AG04450 (cell line): ENCODE measurements at regions of chr2 and their contacts with region 1.

Region 1: DNA sequence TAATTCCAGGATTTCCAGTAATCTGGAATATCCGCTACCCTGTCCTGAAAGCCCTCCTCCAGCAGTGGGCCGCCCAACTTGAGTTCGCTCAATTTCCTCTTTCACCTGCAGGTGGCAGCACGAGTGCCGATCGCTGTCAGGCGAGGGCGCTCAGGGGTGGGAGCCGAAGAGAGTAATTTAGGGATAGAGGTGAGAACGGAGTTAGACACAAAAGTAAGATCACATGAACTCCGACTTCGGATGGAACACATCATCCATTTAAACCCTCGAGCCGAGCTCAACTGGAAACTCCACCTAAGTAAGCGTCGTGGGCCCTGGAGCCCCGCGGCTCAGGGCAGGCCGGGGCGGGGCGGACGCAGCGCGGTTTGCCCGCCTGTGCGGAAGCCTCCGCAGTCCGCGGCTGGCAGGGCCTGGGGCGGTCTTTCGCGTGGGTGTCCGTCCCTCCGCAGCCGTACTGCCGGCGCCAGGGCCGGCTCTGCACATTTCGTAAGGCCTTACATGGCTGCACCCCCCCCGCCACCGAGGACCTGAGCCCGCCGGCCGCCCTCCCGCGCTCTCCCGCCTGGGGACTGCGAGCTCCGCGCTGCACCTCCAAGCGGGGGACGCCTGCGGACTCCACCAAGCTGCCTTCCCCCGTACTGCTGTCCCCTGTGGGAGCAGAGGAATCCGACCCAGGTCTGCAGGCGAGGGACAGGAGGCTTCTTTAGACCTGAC is 61.2 kb downstream of the SEMA4F start:
- DNase-seq: peak; percentile 24
- H3K4me3 ChIP-seq: peak overlapping the region; percentile 60
- H3K27ac ChIP-seq: no peak overlapping the region
- H3K27me3 ChIP-seq: peaks cover 14% of the 10 kb centered on the region
- CTCF ChIP-seq: peak; percentile 90

Region 2: DNA sequence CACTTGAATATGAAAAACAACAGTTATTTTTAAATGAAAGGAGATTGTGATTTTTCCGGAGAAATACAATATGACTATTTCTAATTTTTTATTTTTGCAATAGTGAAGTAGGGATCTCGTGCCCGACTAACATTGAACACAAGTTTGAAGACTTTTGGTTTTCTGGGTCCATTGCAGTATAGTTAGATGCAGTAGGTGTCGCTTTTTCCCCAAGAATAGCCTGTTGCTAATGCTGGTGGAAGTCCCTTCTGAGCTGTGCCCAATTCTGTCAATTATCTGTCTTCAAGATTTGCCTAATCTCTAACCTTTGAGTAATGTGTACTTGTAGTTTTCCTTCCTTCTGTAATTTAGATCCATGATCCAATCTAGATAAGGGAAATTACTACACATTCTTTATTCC is 24.7 kb before region 1 on chr2:
- CTCF ChIA-PET with region 1: interaction called, 29 read pairs
- POLR2A ChIA-PET with region 1: no interaction called
- DNase-seq: peak; percentile 41
- H3K4me3 ChIP-seq: no peak overlapping the region
- H3K27ac ChIP-seq: no peak overlapping the region
- H3K27me3 ChIP-seq: no peaks in the 10 kb centered on the region
- CTCF ChIP-seq: peak; percentile 88

Region 3: GRCh38 chr2:74696829-74697228 is 18.4 kb before region 1 on chr2:
- CTCF ChIA-PET with region 1: interaction called, 29 read pairs
- POLR2A ChIA-PET with region 1: no interaction called
- DNase-seq: peak; percentile 72
- H3K4me3 ChIP-seq: no peak overlapping the region
- H3K27ac ChIP-seq: peak overlapping the region; percentile 57
- H3K27me3 ChIP-seq: peaks cover 3% of the 10 kb centered on the region
- CTCF ChIP-seq: no peak

Region 4: DNA sequence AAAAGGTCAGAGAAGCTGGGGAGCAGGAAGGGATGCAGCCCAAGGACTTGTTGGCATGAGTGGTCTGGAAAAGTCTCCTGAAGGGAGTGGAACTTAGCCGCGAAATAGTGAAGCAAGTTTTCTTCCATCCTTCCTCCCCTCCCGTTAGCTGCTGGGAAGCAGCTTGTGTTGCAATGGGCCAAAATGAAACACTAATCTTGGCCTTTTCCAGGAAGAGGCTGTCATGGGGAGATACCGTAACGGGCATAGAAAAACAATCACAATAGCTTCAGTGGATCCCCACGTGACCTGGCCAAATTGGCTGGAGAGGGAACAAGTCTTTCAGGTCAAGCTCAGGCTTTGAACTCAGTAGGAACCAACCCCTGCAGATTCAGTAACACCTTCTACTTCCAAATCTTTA is 11.9 kb before region 1 on chr2:
- CTCF ChIA-PET with region 1: interaction called, 14 read pairs
- POLR2A ChIA-PET with region 1: no interaction called
- DNase-seq: no peak
- H3K4me3 ChIP-seq: no peak overlapping the region
- H3K27ac ChIP-seq: no peak overlapping the region
- H3K27me3 ChIP-seq: peaks cover 3% of the 10 kb centered on the region
- CTCF ChIP-seq: no peak

Region 5: DNA sequence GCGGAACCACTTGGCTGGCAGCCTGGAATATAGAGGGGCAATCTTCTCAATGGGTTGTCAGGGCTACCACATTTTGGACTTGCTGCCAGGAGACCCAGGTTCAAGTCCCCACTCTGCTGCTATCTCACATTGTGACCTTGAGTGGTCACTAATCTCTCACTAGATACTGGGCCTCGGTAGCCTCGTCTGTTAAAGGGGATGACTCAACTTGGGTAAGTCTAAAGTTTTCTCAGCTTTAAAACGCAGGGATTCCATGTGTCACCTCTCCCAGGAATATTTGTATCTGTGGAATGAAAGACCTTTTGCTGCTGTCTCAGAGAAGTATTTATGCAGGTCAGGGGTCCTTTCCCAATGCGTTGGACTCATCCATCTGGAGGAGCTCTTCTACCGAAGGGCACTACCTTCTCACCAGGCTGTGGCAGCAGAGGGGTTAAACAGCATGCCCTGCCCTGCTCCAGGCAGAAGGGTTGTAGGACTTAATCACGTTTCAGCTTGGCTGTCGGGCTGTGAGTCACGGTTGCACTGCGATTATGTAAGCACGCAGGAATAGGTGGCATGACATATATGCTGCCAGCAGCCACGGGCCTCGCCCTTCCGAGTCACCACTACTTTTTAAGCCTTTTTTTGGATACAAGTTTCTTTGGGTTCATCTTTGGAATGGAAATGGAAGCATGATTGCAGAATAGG is 25.3 kb after region 1 on chr2:
- CTCF ChIA-PET with region 1: interaction called, 16 read pairs
- POLR2A ChIA-PET with region 1: interaction called, 4 read pairs
- DNase-seq: peak; percentile 64
- H3K4me3 ChIP-seq: no peak overlapping the region
- H3K27ac ChIP-seq: peak overlapping the region; percentile 49
- H3K27me3 ChIP-seq: no peaks in the 10 kb centered on the region
- CTCF ChIP-seq: no peak

Region 6: GRCh38 chr2:74834792-74835752 is 119.8 kb after region 1 on chr2:
- CTCF ChIA-PET with region 1: interaction called, 12 read pairs
- POLR2A ChIA-PET with region 1: no interaction called
- DNase-seq: no peak
- H3K4me3 ChIP-seq: peak overlapping the region; percentile 77
- H3K27ac ChIP-seq: peak overlapping the region; percentile 65
- H3K27me3 ChIP-seq: no peaks in the 10 kb centered on the region
- CTCF ChIP-seq: no peak

Region 7: GRCh38 chr2:75035444-75036353 is 320.5 kb after region 1 on chr2:
- CTCF ChIA-PET with region 1: no interaction called
- POLR2A ChIA-PET with region 1: no interaction called
- DNase-seq: no peak
- H3K4me3 ChIP-seq: no peak overlapping the region
- H3K27ac ChIP-seq: no peak overlapping the region
- H3K27me3 ChIP-seq: no peaks in the 10 kb centered on the region
- CTCF ChIP-seq: no peak